ENCODE measurements at regions of chr4 and their contacts with region 1.

Region 1: DNA sequence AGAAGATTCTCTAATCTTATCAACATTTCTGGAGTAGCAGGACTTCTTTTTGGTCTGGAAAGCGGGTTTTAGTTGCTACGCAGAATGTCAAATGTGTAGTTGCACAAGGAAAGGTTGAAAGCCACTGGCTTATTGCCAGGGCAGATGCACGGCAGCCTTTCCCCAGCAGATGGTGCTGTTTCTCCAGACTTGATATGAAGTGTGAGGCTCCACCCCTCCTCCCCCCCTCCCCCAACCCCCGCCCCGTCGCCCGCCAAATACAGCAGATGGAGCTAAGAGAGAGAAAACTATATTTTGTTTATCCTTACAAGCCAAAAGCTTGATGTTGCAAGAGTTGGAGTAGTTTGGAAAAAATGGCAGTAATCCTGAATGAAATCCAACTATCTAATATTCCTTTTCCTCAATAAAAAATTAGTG is 32.0 kb downstream of the ENOPH1 start:
- DNase-seq: peak; percentile 86
- H3K4me3 ChIP-seq: no peak overlapping the region
- H3K27ac ChIP-seq: no peak overlapping the region
- H3K4me1 ChIP-seq: no peaks in the 10 kb centered on the region
- H3K27me3 ChIP-seq: no peaks in the 10 kb centered on the region
- CTCF ChIP-seq: peak; percentile 62 to 80
- POLR2A ChIP-seq: no peak

Region 2: GRCh38 chr4:82346126-82346525 is 116.3 kb before region 1 on chr4:
- CTCF ChIA-PET with region 1: no interaction called
- POLR2A ChIA-PET with region 1: no interaction called
- dilution Hi-C with region 1: no loop called
- intact Hi-C with region 1: no loop called
- DNase-seq: no peak
- H3K4me3 ChIP-seq: no peak overlapping the region
- H3K27ac ChIP-seq: no peak overlapping the region
- H3K4me1 ChIP-seq: no peaks in the 10 kb centered on the region
- H3K27me3 ChIP-seq: no peaks in the 10 kb centered on the region
- CTCF ChIP-seq: no peak
- POLR2A ChIP-seq: no peak

Region 3: GRCh38 chr4:82493721-82494425 is 31.4 kb after region 1 on chr4:
- CTCF ChIA-PET with region 1: no interaction called
- POLR2A ChIA-PET with region 1: no interaction called
- dilution Hi-C with region 1: no loop called
- intact Hi-C with region 1: no loop called
- DNase-seq: no peak
- H3K4me3 ChIP-seq: no peak overlapping the region
- H3K27ac ChIP-seq: no peak overlapping the region
- H3K4me1 ChIP-seq: no peaks in the 10 kb centered on the region
- H3K27me3 ChIP-seq: no peaks in the 10 kb centered on the region
- CTCF ChIP-seq: no peak
- POLR2A ChIP-seq: no peak

Region 4: GRCh38 chr4:82561745-82562515 is 99.5 kb after region 1 on chr4 and contains the start of gene TMEM150C:
- CTCF ChIA-PET with region 1: interaction called, 3 read pairs
- POLR2A ChIA-PET with region 1: no interaction called
- dilution Hi-C with region 1: no loop called
- intact Hi-C with region 1: loop called (anchors 2 kb)
- DNase-seq: peak; percentile 26
- H3K4me3 ChIP-seq: peak within 1 kb of the TSS; percentile 58 to 81 (median 75)
- H3K27ac ChIP-seq: no peak within 1 kb of the TSS
- H3K4me1 ChIP-seq: peaks cover 4% of the 10 kb centered on the region
- H3K27me3 ChIP-seq: peaks cover 0 to 10% of the 10 kb centered on the region in 2 experiments
- CTCF ChIP-seq: no peak
- POLR2A ChIP-seq: no peak
- total RNA-seq, gene TMEM150C: 6.5 and 6.6 TPM in 2 replicates

Region 5: GRCh38 chr4:82785611-82786400 is 323.4 kb after region 1 on chr4:
- CTCF ChIA-PET with region 1: interaction called, 14 read pairs
- POLR2A ChIA-PET with region 1: no interaction called
- dilution Hi-C with region 1: no loop called
- intact Hi-C with region 1: no loop called
- DNase-seq: peak; percentile 98
- H3K4me3 ChIP-seq: peak overlapping the region; percentile 12 to 69 (median 21)
- H3K27ac ChIP-seq: peak overlapping the region; percentile 98
- H3K4me1 ChIP-seq: peaks cover 44% of the 10 kb centered on the region
- H3K27me3 ChIP-seq: no peaks in the 10 kb centered on the region
- CTCF ChIP-seq: no peak
- POLR2A ChIP-seq: no peak

Region 6: GRCh38 chr4:82811838-82812341 is 349.5 kb after region 1 on chr4:
- CTCF ChIA-PET with region 1: interaction called, 20 read pairs
- POLR2A ChIA-PET with region 1: no interaction called
- dilution Hi-C with region 1: no loop called
- intact Hi-C with region 1: no loop called
- DNase-seq: peak; percentile 28
- H3K4me3 ChIP-seq: no peak overlapping the region
- H3K27ac ChIP-seq: no peak overlapping the region
- H3K4me1 ChIP-seq: peaks cover 6% of the 10 kb centered on the region
- H3K27me3 ChIP-seq: no peaks in the 10 kb centered on the region
- CTCF ChIP-seq: no peak
- POLR2A ChIP-seq: no peak

Region 7: GRCh38 chr4:82842593-82842992 is 380.2 kb after region 1 on chr4:
- CTCF ChIA-PET with region 1: interaction called, 6 read pairs
- POLR2A ChIA-PET with region 1: no interaction called
- dilution Hi-C with region 1: no loop called
- intact Hi-C with region 1: loop called (anchors 5 kb)
- DNase-seq: peak; percentile 36
- H3K4me3 ChIP-seq: no peak overlapping the region
- H3K27ac ChIP-seq: no peak overlapping the region
- H3K4me1 ChIP-seq: peaks cover 14% of the 10 kb centered on the region
- H3K27me3 ChIP-seq: no peaks in the 10 kb centered on the region
- CTCF ChIP-seq: peak; percentile 11 to 46
- POLR2A ChIP-seq: no peak

Region 8: DNA sequence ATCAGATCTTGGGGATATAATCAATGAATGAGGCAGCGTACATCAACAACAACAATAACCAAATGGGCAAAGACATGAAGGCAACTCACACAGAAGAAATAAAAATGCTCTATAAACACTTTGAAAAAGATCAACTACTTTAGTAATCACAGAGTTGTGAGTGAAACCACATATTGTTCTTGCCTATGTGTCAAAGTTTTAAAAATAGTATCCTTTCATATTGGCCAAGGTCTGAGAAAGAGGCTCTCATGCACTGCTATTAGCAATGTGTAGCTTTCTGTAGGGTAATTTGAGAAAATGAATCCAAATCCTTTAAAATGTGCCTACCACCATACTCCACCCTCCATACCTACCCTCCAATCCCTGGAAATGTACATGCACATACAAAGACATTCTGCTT is 797.2 kb after region 1 on chr4:
- CTCF ChIA-PET with region 1: interaction called, 3 read pairs
- POLR2A ChIA-PET with region 1: no interaction called
- dilution Hi-C with region 1: no loop called
- intact Hi-C with region 1: loop called (anchors 5 kb)
- DNase-seq: no peak
- H3K4me3 ChIP-seq: no peak overlapping the region
- H3K27ac ChIP-seq: no peak overlapping the region
- H3K4me1 ChIP-seq: peaks cover 39% of the 10 kb centered on the region
- H3K27me3 ChIP-seq: no peaks in the 10 kb centered on the region
- CTCF ChIP-seq: no peak
- POLR2A ChIP-seq: no peak